Natural killer cell (primary cell): ENCODE measurements at regions of chr11 and their contacts with region 1.

Region 1: DNA sequence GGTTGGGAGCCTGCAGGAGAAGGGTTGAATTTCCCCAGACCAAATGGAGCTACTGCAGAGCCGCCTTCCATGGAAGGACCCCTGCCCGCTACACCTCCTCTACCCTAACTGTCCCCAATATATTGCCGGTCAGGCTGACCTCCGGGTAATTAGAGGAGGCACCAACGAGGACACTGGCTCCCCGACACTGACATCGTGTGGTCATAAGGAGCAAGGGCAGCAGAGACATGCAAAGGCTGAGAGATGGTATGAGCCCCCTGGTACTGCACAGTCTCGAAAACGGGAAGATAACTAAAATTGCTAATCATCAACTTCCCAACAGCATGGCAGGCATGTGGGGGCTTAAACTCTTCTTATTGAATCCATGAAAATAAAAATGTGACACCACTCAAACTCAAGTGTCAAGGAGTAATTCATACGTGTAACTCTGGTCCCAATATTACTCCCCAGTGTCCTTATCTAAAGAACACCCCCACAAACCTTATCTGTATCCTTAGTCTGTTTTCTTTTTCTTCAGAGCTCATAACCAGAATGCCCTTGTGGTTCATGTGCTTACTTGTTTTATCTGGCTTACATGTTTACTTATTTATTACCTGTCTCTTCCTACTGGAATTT is 4.4 kb downstream of the CAVIN3 start:
- DNase-seq: peak in 1 of 2 donors; percentile 60
- ATAC-seq: peak; percentile 71 to 92 (median 74)
- H3K4me3 ChIP-seq: no peak overlapping the region
- H3K4me3 Mint-ChIP-seq: no peak overlapping the region
- H3K27ac ChIP-seq: no peak overlapping the region
- H3K27ac Mint-ChIP-seq: no peak overlapping the region
- H3K4me1 ChIP-seq: no peaks in the 10 kb centered on the region
- H3K4me1 Mint-ChIP-seq: no peaks in the 10 kb centered on the region
- H3K27me3 ChIP-seq: peaks cover under 1% of the 10 kb centered on the region
- H3K27me3 Mint-ChIP-seq: peaks cover 45 to 54% of the 10 kb centered on the region in 2 donors
- CTCF ChIP-seq: peak; percentile 76

Region 2: GRCh38 chr11:6022956-6023355 is 293.0 kb before region 1 on chr11:
- intact Hi-C with region 1: loop called (anchors 1 kb)
- DNase-seq: peak in 1 of 2 donors; percentile 66
- ATAC-seq: peak; percentile 73 to 86 (median 76)
- H3K4me3 ChIP-seq: no peak overlapping the region
- H3K4me3 Mint-ChIP-seq: no peak overlapping the region
- H3K27ac ChIP-seq: no peak overlapping the region
- H3K27ac Mint-ChIP-seq: no peak overlapping the region
- H3K4me1 ChIP-seq: no peaks in the 10 kb centered on the region
- H3K4me1 Mint-ChIP-seq: no peaks in the 10 kb centered on the region
- H3K27me3 ChIP-seq: peaks cover 7% of the 10 kb centered on the region
- H3K27me3 Mint-ChIP-seq: peaks cover 30 to 68% of the 10 kb centered on the region in 2 donors
- CTCF ChIP-seq: peak; percentile 82